Activated CD8-positive, alpha-beta T cell treated with anti-CD3 and anti-CD28 coated beads for 36 hours (primary cell): ENCODE measurements at regions of chr10 and their contacts with region 1.

Region 1: DNA sequence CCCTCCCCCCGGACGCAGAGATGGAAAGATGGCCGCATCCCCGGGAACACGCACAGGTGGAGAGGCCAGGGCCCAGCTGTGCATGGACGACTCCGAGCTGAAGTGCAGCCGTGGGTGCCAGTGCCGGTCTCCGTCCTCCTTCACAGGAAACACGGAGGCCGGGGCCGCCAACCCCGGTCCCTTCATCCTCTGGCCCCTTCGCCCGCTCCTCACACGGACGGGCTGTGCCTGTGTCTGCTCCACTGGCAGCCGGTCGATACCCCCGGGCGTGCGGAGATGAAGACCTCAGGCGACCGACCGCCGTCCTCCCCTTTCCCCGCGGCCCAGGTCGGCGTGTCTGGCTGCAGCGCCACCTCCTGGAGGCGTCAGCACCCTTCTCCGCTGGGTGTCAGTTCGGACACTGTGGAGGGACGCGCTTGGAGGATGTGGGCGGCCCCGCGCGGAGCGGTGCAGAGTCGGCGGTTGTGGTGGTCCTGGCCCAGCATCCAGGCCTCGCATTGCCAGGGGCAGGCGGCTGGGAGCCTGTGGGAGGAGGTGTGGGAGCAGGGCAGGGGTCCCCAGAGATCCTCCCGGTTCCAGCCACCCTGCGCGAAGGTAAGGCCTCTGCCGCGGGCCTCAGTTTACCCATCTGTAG is 9.9 kb downstream of the ZNF511 start:
- DNase-seq: peak; percentile 79
- ATAC-seq: peak; percentile 94
- H3K4me3 Mint-ChIP-seq: peak overlapping the region; percentile 65
- H3K27ac Mint-ChIP-seq: no peak overlapping the region
- H3K4me1 Mint-ChIP-seq: peaks cover 8% of the 10 kb centered on the region
- H3K27me3 Mint-ChIP-seq: peaks cover 10% of the 10 kb centered on the region
- CTCF ChIP-seq: peak; percentile 81

Region 2: GRCh38 chr10:133302209-133302608 is 16.4 kb before region 1 on chr10:
- CTCF ChIA-PET with region 1: interaction called, 11 read pairs
- POLR2A ChIA-PET with region 1: no interaction called
- intact Hi-C with region 1: no loop called
- DNase-seq: no peak
- ATAC-seq: no peak
- H3K4me3 Mint-ChIP-seq: no peak overlapping the region
- H3K27ac Mint-ChIP-seq: no peak overlapping the region
- H3K4me1 Mint-ChIP-seq: peaks cover 28% of the 10 kb centered on the region
- H3K27me3 Mint-ChIP-seq: no peaks in the 10 kb centered on the region
- CTCF ChIP-seq: no peak